Endothelial cell of umbilical vein (primary cell): ENCODE measurements at regions of chr22 and their contacts with region 1.

Region 1: DNA sequence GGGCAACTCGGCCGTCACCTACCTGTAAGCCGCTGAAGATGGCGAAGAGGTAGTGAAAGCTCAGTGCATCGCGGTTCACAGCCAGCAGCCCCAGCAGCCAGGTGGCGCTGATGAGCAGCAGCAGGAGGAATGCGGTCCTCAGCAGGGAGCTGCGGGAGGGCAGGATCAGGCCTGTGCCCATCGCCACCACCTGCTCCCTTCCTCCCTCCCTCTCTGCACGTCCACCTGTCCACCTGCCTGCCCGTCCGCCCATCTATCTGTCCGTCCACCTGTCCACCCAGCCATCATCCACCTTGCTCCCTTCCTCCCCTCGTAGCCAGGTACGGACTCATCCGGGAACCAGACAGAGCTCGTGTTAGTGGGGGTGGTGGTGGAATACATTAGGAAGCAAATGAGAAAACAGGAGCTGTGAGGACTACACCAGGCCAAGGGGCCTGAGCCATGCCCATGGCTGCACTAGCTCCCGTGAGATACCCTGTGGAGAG is 32.2 kb downstream of the TRMU start:
- DNase-seq: peak; percentile 35
- H3K4me3 ChIP-seq: no peak overlapping the region
- H3K27ac ChIP-seq: no peak overlapping the region
- H3K4me1 ChIP-seq: no peaks in the 10 kb centered on the region
- H3K27me3 ChIP-seq: no peaks in the 10 kb centered on the region
- CTCF ChIP-seq: peak; percentile 79 to 95
- POLR2A ChIP-seq: no peak

Region 2: GRCh38 chr22:46229701-46230100 is 138.0 kb before region 1 on chr22:
- CTCF ChIA-PET with region 1: no interaction called
- POLR2A ChIA-PET with region 1: no interaction called
- dilution Hi-C with region 1: no loop called
- intact Hi-C with region 1: no loop called
- DNase-seq: no peak
- H3K4me3 ChIP-seq: no peak overlapping the region
- H3K27ac ChIP-seq: no peak overlapping the region
- H3K4me1 ChIP-seq: no peaks in the 10 kb centered on the region
- H3K27me3 ChIP-seq: no peaks in the 10 kb centered on the region
- CTCF ChIP-seq: no peak
- POLR2A ChIP-seq: no peak

Region 3: GRCh38 chr22:46355371-46355995 is 12.3 kb before region 1 on chr22:
- CTCF ChIA-PET with region 1: interaction called, 43 read pairs
- POLR2A ChIA-PET with region 1: interaction called, 3 read pairs
- dilution Hi-C with region 1: no loop called
- intact Hi-C with region 1: no loop called
- DNase-seq: peak; percentile 42
- H3K4me3 ChIP-seq: no peak overlapping the region
- H3K27ac ChIP-seq: no peak overlapping the region
- H3K4me1 ChIP-seq: no peaks in the 10 kb centered on the region
- H3K27me3 ChIP-seq: no peaks in the 10 kb centered on the region
- CTCF ChIP-seq: peak; percentile 77 to 83
- POLR2A ChIP-seq: no peak

Region 4: GRCh38 chr22:46391486-46392136 is 23.9 kb after region 1 on chr22:
- CTCF ChIA-PET with region 1: interaction called, 12 read pairs
- POLR2A ChIA-PET with region 1: no interaction called
- dilution Hi-C with region 1: no loop called
- intact Hi-C with region 1: no loop called
- DNase-seq: no peak
- H3K4me3 ChIP-seq: no peak overlapping the region
- H3K27ac ChIP-seq: no peak overlapping the region
- H3K4me1 ChIP-seq: no peaks in the 10 kb centered on the region
- H3K27me3 ChIP-seq: no peaks in the 10 kb centered on the region
- CTCF ChIP-seq: no peak
- POLR2A ChIP-seq: no peak

Region 5: GRCh38 chr22:46528121-46528610 is 160.4 kb after region 1 on chr22:
- CTCF ChIA-PET with region 1: interaction called, 16 read pairs
- POLR2A ChIA-PET with region 1: no interaction called
- dilution Hi-C with region 1: no loop called
- intact Hi-C with region 1: no loop called
- DNase-seq: peak; percentile 27
- H3K4me3 ChIP-seq: peak overlapping the region in 1 of 3 experiments; percentile 48
- H3K27ac ChIP-seq: no peak overlapping the region
- H3K4me1 ChIP-seq: peaks cover 5% of the 10 kb centered on the region
- H3K27me3 ChIP-seq: peaks cover 4 to 9% of the 10 kb centered on the region in 2 experiments
- CTCF ChIP-seq: no peak
- POLR2A ChIP-seq: no peak

Region 6: DNA sequence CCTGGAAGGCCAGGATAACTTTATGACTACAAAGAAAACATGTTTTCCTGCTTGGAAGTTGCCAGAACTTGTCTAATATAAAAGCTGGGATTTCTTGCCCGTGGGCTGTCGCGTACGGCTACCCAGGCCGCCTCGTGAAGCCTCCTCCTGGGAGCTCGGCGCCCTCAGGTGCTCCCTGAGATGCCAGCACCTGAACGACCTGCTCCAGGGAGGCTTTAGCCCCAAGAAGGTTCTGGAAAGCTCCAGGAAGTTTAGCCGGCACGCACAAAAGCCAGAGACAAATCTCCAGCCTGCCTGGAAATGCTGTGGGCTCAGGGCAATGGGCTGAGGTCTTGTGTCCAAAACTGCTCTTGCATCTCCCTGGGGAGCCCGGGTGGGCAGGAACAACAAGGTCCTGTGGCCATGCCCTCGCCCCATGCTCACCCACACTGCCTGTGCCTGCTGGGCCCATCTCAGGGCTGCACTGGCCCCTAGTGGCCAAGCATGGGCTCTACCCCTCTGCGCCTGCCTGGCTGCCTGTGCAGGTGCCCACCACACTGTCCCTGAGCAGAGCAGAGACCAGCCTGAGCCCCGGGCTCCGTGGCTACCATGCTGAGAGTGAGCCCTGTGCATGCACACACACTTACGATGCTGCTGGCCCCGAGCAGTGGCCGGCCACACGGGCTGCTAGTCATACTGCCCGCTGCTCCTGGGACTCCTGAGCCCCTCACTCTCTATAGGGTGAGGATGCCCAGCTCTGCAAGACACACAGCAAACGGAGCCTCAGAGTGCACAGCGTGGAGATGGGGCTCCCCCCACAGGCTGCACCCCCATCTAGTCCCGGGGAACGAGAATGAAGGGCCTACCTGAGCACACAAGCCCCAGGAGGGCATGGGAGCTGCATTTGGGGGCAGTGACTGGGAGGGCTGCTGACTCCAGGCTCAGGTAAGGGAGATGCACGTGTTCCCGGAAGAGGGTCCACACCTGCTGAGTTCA is 174.5 kb after region 1 on chr22:
- CTCF ChIA-PET with region 1: interaction called, 418 read pairs
- POLR2A ChIA-PET with region 1: no interaction called
- dilution Hi-C with region 1: no loop called
- intact Hi-C with region 1: loop called (anchors 1 kb)
- DNase-seq: peak; percentile 66
- H3K4me3 ChIP-seq: no peak overlapping the region
- H3K27ac ChIP-seq: no peak overlapping the region
- H3K4me1 ChIP-seq: peaks cover 22% of the 10 kb centered on the region
- H3K27me3 ChIP-seq: peaks cover 12 to 21% of the 10 kb centered on the region in 2 experiments
- CTCF ChIP-seq: peak; percentile 90 to 99
- POLR2A ChIP-seq: no peak

Region 7: GRCh38 chr22:46563381-46564083 is 195.8 kb after region 1 on chr22:
- CTCF ChIA-PET with region 1: interaction called, 18 read pairs
- POLR2A ChIA-PET with region 1: no interaction called
- dilution Hi-C with region 1: no loop called
- intact Hi-C with region 1: no loop called
- DNase-seq: peak; percentile 48
- H3K4me3 ChIP-seq: no peak overlapping the region
- H3K27ac ChIP-seq: no peak overlapping the region
- H3K4me1 ChIP-seq: no peaks in the 10 kb centered on the region
- H3K27me3 ChIP-seq: no peaks in the 10 kb centered on the region
- CTCF ChIP-seq: peak; percentile 77 to 93
- POLR2A ChIP-seq: no peak